ENCODE measurements at regions of chr2 and their contacts with region 1.

Region 1: DNA sequence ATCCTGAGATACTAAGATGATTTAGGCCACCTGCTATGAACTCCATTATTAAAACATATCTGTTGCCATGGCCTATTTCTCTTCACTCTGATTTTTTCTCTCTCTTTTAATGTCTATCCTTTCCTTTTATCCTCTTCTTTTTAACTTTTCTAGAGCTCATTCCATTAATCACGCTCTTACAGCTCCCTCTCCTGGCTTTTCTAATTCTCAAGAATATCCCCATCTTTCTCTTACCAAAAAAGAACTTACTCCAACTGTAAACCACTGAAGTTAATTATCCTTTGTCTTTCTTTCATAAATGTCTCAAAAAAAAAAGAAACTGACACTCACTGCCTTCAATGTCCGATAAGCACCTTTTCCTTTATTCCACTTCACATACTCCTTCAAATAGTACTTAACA is 7.9 kb downstream of the PPP3R1 start:
- DNase-seq: no peak
- H3K4me3 ChIP-seq: no peak overlapping the region
- H3K27ac ChIP-seq: no peak overlapping the region
- H3K4me1 ChIP-seq: peaks cover 11% of the 10 kb centered on the region
- H3K27me3 ChIP-seq: no peaks in the 10 kb centered on the region
- CTCF ChIP-seq: no peak

Region 2: DNA sequence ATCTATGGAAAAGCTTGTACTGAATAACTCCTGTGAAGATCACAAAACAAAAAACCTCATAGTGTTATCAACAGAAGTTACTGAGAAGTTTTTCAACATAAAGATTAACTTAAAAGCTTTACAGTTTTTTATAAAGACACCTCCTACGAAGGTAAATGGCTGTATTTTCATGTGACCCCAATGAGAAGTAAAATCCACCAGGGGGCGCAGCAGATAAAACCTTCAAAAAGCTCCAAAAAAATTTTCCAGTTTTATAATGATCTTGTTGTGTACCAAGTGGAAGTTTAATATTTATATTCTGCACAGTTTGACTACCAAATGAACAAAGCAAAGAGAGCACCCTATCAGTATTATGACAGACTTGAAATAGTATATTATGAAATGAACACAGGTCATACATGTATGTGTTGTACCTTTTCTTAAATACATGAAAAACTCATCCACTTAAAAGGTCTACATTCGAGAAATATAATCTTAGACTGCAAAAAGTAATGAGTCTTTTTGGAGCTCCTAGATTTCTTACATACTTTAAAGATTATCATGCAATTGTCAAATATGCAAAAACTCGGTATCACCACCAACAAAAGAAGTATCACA is 48.2 kb before region 1 on chr2:
- intact Hi-C with region 1: loop called (anchors 10 kb)
- DNase-seq: peak; percentile 55
- H3K4me3 ChIP-seq: no peak overlapping the region
- H3K27ac ChIP-seq: no peak overlapping the region
- H3K4me1 ChIP-seq: peaks cover 1% of the 10 kb centered on the region
- H3K27me3 ChIP-seq: no peaks in the 10 kb centered on the region
- CTCF ChIP-seq: peak; percentile 69

Region 3: DNA sequence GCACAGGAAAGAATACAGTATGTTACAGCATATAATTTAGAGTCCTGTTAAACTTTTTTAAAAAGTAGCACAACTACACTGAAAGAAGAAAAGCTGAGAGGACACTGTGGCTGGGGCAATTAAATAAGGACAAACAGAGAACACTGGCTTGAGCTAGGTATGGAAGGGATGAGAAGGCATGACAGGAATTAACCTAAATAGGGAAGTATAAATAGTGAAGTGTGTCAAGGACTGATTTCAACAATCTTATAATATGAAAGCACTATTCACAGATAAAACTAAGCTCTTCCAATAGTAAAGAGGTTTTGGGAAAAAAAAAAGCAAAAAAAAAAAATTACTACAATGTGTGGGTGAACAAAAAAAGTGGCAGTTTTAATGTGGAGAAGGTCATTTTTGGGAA is 37.7 kb before region 1 on chr2:
- intact Hi-C with region 1: no loop called
- DNase-seq: no peak
- H3K4me3 ChIP-seq: no peak overlapping the region
- H3K27ac ChIP-seq: no peak overlapping the region
- H3K4me1 ChIP-seq: peaks cover 3% of the 10 kb centered on the region
- H3K27me3 ChIP-seq: no peaks in the 10 kb centered on the region
- CTCF ChIP-seq: no peak

Region 4: DNA sequence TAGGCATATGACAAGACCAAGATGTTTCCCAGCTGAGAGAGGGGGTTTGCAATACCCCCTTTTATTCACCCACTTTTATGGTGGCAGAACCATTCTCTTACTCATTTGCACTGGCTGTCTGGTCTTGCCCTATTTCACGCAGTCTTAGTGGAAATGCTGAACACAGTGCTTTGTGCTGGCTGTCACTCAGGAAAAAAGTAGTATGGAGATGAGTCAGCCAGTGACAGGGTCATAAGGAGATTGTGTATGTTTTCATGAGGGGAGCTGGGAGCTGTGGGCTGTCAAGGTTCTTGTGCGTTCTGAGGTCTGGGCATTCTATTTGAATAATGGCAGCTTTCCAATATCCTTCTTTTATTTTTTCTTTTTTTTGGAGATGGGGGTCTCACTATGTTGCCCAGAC is 86.2 kb after region 1 on chr2:
- intact Hi-C with region 1: no loop called
- DNase-seq: no peak
- H3K4me3 ChIP-seq: no peak overlapping the region
- H3K27ac ChIP-seq: no peak overlapping the region
- H3K4me1 ChIP-seq: no peaks in the 10 kb centered on the region
- H3K27me3 ChIP-seq: no peaks in the 10 kb centered on the region
- CTCF ChIP-seq: no peak

Region 5: DNA sequence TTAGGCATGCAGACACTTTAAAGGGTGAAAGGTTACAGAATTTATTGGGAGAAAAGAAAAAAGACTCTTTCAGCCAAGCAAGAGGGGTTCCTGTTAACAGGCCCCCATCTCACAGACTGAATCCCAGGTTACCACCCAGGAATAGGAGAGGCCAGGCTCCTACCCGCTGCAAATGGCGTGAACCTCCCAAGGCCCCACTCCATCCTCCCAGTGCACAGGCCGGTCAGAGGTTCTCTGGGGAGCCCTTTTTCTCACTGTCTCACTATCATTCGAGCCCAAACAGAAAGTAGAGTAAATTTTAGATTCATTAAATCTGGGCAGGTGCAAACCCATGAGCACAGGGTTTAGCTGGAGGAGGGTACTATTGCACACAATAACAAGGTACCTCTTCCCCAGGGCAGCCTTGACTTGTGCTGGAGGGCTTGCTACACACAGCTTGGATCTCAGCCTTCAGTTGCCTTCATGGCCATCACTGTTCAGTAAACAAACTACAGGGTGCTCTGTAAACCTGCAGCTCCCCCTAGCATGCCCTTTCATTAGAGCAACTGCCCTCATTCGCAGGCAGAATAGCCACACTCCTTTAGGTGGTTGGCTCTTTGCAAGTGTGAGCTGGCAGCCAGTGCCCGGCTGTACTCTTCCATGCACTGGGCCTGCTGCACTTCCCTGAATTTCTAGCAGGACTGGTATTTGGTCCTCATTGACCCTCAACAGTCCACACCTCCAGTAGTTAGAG is 113.3 kb after region 1 on chr2:
- intact Hi-C with region 1: no loop called
- DNase-seq: no peak
- H3K4me3 ChIP-seq: no peak overlapping the region
- H3K27ac ChIP-seq: no peak overlapping the region
- H3K4me1 ChIP-seq: no peaks in the 10 kb centered on the region
- H3K27me3 ChIP-seq: no peaks in the 10 kb centered on the region
- CTCF ChIP-seq: no peak

Measured in colonic mucosa (tissue), 4 donors.